Activated CD4-positive, alpha-beta T cell treated with anti-CD3 and anti-CD28 coated beads, Interleukin-2, amount 10 ng/mL, durations not matched to agents 24 days and 14 days (primary cell): ENCODE measurements at regions of chr9 and their contacts with region 1.

Region 1: DNA sequence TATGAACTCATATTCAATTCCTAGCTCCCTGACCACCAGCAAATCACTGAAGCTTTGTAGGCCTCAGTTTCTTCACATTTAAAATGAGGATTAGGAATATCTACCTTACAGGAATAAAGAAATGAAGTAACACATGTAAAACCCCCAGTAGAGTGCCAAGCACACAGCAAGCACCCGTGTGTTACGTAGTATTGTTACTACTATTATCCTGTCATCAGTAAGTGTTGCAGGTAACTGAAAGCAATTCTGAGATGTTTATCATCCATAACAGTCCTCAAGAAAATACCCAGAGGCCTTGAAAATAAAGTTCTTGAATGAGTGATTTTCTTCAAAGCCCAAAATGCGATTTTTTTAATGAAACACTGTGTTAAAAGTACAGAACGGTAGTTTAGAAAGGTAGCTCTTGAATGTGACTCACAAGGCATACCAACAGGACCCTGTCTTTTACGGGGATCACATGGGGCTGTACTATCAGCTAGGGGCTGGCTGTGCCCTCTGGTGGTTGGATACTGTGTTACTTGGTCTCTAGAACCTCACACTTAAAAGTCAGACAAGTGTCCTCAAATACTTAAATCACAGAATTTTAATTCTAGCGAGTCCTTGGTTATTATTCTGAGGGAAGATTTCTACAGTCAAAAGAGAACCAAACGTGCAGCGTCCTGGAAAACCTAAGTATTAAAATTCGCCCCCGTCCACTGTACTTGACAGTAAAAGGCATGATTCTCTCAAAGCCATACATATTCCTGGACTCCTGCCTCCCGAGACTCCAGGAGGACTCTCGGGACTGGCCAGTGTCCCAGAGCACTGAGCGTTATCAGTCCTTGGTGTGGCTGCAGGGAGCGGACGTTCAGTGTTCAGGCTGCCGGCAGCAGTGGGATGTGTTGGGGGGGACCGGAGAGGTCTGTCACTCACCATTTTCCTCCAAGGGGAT is 725 bp downstream of the NDUFB6 start:
- DNase-seq: peak; percentile 91
- H3K4me3 Mint-ChIP-seq: peak overlapping the region; percentile 99
- H3K27ac Mint-ChIP-seq: peak overlapping the region; percentile 98
- H3K4me1 Mint-ChIP-seq: peaks cover 22% of the 10 kb centered on the region
- H3K27me3 Mint-ChIP-seq: peaks cover 2% of the 10 kb centered on the region

Region 2: DNA sequence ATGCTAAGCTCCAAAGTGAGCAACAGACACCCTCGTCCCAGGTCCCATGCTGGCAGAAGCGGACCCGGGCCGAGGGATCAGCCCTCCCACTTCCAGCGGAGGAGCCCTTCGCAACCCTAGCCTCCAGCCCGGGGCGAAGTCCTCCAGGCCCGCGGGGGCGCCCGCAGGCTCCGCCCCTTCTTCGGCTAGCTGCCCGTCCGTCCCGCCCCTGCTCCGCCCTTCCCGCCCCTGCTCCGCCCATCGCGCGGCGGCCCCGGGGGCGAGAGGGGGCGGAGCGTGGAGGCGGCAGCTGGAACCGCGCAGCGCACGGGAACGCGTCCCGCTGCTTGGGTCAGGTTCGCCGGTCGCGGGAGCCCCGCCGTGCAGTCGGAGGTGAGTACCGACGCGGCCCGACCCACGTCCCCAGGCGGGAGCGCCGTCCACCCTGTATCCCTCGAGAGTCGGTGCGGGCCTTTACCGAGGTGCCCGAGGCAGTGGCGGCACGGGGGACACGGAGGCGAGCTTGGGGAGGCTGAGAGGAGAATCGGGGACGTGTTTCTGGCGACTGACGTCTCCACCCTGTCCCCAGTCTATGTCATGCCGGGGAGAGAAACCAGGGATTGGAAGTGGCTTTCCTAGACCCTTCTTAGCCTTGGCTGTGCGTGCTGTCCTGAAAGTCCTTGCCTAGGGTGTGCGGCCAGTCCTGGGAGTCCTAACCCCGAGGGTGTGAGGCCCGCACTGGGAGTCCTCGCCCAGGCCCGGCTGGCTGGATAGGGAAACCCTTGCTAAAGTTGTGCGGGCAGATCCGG is 187.7 kb before region 1 on chr9 and contains the start of gene ACO1:
- intact Hi-C with region 1: loop called (anchors 1 kb)
- DNase-seq: peak; percentile 97
- H3K4me3 Mint-ChIP-seq: peak within 1 kb of the TSS; percentile 85
- H3K27ac Mint-ChIP-seq: peak within 1 kb of the TSS; percentile 23
- H3K4me1 Mint-ChIP-seq: peaks cover 12% of the 10 kb centered on the region
- H3K27me3 Mint-ChIP-seq: peaks cover 32% of the 10 kb centered on the region
- total RNA-seq, gene ACO1: 7.4 TPM in 2 replicates

Region 3: DNA sequence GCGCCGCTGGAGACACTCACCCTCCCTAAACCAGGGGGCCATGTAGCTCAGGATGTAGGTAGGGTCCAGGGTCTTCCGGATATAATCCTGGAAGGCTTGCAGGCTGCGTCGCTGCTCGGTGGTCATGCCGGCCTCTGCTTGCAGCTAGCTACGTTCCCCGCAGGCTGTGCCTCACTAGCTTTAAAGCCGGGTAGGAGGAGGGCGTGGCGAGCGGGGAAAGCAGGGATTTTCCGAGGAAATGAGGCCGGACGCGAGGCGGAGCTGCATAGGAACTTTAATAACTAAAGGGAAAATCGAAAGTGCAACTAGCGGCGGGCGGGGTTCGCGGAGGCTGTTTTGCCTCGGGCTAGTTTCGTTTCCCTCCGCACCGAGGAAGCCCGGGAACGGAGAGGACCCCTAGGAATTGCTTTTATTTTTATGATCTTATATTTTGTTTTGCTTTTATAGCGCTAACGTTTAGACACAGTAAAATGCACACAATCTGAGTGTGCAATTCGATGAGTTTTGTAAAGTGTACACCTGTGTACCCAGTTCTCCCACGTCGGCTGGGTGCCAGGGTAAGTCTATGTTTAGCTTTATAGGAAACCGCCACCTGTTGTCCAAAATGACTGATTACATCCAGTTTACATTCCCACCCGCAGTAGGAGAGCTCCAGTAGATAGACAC is 46.1 kb before region 1 on chr9 and contains the start of gene RIGI:
- intact Hi-C with region 1: loop called (anchors 1 kb)
- DNase-seq: peak; percentile 96
- H3K4me3 Mint-ChIP-seq: peak within 1 kb of the TSS; percentile 94
- H3K27ac Mint-ChIP-seq: peak within 1 kb of the TSS; percentile 80
- H3K4me1 Mint-ChIP-seq: peaks cover 39% of the 10 kb centered on the region
- H3K27me3 Mint-ChIP-seq: no peaks in the 10 kb centered on the region
- total RNA-seq, gene RIGI: 5.5 and 6.1 TPM in 2 replicates

Region 4: GRCh38 chr9:32550562-32551433 is 21.4 kb before region 1 on chr9:
- intact Hi-C with region 1: loop called (anchors 1 kb)
- DNase-seq: peak; percentile 98
- H3K4me3 Mint-ChIP-seq: peak overlapping the region; percentile 99
- H3K27ac Mint-ChIP-seq: peak overlapping the region; percentile 100
- H3K4me1 Mint-ChIP-seq: peaks cover 40% of the 10 kb centered on the region
- H3K27me3 Mint-ChIP-seq: no peaks in the 10 kb centered on the region